AG04450 (cell line): ENCODE measurements at regions of chr3 and their contacts with region 1.

Region 1: DNA sequence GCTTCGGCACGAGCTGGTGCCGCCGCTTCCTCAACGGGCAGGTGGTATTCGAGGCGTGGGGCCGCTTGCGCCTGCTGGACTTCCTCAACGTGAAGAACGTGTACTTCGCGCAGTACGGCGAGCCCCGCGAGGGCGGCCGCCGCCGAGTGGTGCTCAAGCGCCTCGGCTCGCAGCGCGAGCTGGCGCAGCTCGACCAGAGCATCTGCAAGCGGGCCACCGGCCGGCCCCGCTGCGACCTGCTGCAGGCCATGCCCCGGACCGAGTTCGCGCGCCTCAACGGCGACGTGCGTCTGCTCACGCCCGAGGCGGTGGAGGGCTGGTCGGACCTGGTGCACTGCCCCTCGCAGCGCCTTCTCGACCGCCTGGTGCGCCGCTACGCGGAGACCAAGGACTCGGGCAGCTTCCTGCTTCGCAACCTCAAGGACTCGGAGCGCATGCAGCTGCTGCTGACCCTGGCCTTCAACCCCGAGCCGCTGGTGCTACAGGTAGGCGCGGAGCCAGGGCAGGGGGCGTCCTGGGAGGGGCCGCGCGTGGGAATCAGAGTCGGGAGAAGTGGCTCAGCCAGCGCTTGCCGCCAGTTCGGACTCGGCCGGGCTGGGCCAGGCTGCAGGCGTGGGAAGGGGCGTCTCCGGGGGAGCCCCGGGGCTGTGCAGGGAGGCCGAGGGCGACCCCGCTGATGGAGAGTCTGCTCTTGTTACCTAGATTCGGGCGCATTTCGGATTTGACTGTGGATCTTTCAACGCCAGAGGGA is 1.1 kb downstream of the DIPK2A start:
- DNase-seq: no peak
- H3K4me3 ChIP-seq: peak overlapping the region; percentile 94
- H3K27ac ChIP-seq: peak overlapping the region; percentile 84
- H3K27me3 ChIP-seq: no peaks in the 10 kb centered on the region
- CTCF ChIP-seq: peak; percentile 58

Region 2: DNA sequence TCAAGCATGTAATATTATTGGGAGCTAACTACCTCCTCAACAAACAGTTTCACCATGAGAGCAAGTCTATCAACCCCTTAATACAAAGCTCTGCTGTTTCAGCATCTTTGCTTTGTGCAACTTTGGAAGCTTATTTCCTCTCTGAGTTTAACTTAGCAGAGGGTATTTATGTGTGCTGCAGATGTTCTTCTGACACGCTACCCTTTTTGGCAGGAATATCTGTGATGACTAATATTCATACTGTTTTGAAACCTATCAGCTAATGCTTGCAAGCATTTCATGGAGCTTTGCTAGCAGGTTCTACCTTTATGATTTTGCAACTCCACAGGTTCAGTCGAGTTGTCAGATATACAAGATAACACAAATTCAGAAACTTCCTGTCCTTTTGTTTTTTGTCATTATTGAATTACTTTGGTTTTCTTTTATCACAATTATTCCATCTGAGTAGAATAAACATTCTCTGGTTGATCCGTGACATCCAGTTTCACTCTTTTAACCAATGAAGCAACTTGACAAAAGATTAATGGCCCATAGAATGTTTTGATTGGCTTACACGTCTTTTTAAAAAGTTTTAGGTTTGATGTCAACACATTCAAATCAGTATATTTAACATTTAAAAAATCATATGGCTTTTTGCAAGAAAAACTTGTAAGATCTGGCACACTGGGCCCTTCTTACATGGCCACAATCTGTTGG is 122.7 kb before region 1 on chr3:
- CTCF ChIA-PET with region 1: interaction called, 3 read pairs
- POLR2A ChIA-PET with region 1: interaction called, 12 read pairs
- DNase-seq: peak; percentile 73
- H3K4me3 ChIP-seq: no peak overlapping the region; the same call in 1 of the 2 replicates
- H3K27ac ChIP-seq: no peak overlapping the region
- H3K27me3 ChIP-seq: no peaks in the 10 kb centered on the region
- CTCF ChIP-seq: no peak

Region 3: GRCh38 chr3:143895805-143896204 is 76.9 kb before region 1 on chr3:
- CTCF ChIA-PET with region 1: interaction called, 10 read pairs
- POLR2A ChIA-PET with region 1: interaction called, 3 read pairs
- DNase-seq: no peak
- H3K4me3 ChIP-seq: no peak overlapping the region
- H3K27ac ChIP-seq: no peak overlapping the region
- H3K27me3 ChIP-seq: no peaks in the 10 kb centered on the region
- CTCF ChIP-seq: peak; percentile 43

Region 4: GRCh38 chr3:144142151-144142840 is 169.6 kb after region 1 on chr3:
- CTCF ChIA-PET with region 1: interaction called, 4 read pairs
- POLR2A ChIA-PET with region 1: interaction called, 17 read pairs
- DNase-seq: peak; percentile 48
- H3K4me3 ChIP-seq: peak overlapping the region; percentile 0; the same call in 1 of the 2 replicates
- H3K27ac ChIP-seq: peak overlapping the region; percentile 93
- H3K27me3 ChIP-seq: no peaks in the 10 kb centered on the region
- CTCF ChIP-seq: no peak

Region 5: DNA sequence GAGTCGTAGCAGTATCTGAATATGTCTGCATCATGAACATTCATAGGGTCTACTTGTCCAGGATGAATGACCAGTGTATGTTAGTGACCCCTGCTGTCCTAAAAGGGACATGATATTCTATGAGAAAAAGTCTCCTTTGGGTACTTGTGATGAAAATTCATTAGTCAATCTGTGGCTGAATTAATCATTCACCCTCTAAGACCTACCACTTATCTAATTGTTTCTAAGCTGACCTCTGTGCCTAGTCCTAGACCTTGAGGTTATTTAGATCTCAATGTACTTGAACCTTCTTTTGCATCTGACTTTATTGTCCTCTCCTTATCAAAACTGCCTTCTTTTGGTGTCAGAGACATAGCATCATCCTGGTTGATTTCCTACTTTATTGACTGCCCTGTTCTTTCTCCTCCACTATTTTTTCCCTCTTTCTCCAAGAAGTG is 798.3 kb after region 1 on chr3:
- CTCF ChIA-PET with region 1: interaction called, 13 read pairs
- POLR2A ChIA-PET with region 1: no interaction called
- DNase-seq: peak; percentile 10
- H3K4me3 ChIP-seq: no peak overlapping the region
- H3K27ac ChIP-seq: no peak overlapping the region
- H3K27me3 ChIP-seq: no peaks in the 10 kb centered on the region
- CTCF ChIP-seq: peak; percentile 57